Activated naive CD4-positive, alpha-beta T cell treated with anti-CD3 and anti-CD28 coated beads for 36 hours (primary cell): ENCODE measurements at regions of chr6 and their contacts with region 1.

Region 1: GRCh38 chr6:33788694-33789549 is at the start of gene LEMD2:
- DNase-seq: peak; percentile 95
- H3K4me3 Mint-ChIP-seq: peak within 1 kb of the TSS; percentile 88
- H3K27ac Mint-ChIP-seq: peak within 1 kb of the TSS; percentile 92
- H3K4me1 Mint-ChIP-seq: peaks cover 41% of the 10 kb centered on the region
- H3K27me3 Mint-ChIP-seq: no peaks in the 10 kb centered on the region
- total RNA-seq, gene LEMD2: 64.0 to 66.3 TPM

Region 2: DNA sequence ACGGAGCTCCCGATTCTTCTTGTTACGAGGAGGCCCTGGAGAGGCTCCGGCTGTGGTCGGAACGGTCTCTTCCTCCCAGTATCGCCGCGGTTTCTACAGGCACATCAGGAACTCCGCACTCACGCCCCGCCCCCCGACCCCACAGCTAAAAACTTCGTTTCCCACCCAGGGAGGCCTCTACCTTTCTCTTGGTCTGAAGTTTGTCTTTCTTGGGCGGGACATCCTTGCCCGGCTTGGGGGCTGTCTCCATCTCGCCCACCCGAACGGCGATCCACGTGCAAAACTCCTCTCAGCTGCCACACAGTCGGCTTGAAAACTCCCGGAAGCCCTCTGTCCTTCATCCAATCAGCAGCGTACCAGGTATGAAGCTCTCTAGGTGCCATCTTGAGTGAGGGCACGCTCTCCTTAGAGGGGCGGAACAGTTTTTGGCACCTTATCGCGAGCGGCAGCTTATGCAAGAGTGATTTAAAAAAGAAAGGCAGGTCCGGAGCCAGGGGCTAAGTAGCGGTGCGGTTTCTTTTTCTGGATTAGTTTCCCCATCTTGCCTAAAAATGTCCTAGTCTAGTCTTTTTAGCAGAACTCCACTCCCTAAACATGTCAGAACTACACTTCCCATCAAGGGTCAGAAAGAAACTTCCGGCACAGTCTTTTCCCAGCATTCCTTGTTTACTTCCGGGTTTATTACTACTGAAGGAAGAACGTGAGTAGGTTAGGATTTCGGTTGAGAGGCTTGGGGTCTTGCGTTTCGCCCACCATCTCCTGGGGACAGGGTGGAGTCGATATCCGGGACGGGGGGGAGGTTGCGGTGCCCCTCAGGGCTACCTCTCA is 499.8 kb before region 1 on chr6 and contains the starts of genes PFDN6 and WDR46:
- CTCF ChIA-PET with region 1: no interaction called
- intact Hi-C with region 1: loop called (anchors 2 kb)
- DNase-seq: peak; percentile 85
- H3K4me3 Mint-ChIP-seq: peak within 1 kb of the TSS; percentile 99
- H3K27ac Mint-ChIP-seq: peak within 1 kb of the TSS; percentile 91
- H3K4me1 Mint-ChIP-seq: peaks cover 43% of the 10 kb centered on the region
- H3K27me3 Mint-ChIP-seq: no peaks in the 10 kb centered on the region
- total RNA-seq, gene PFDN6: 67.9 to 81.3 TPM
- total RNA-seq, gene WDR46: 42.5 to 42.9 TPM

Region 3: DNA sequence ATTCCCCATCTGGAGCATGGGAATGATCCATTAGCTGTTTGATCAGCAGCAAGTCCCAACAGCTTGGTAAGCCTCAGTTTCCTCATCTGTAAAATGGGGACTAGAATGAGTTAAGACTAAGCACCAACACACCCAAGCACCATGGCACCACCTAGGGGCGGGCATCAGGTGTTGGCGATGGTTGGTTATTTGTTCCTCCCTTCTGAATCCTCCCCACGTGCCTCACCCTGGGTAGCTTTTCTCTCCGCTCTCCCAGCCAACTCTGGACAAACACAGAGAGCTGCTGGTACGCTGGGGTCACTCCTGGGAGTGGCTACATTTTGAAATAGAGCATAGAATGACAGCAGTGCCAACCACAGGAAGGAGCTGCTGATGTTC is 181.1 kb before region 1 on chr6:
- CTCF ChIA-PET with region 1: no interaction called
- intact Hi-C with region 1: no loop called
- DNase-seq: peak; percentile 70
- H3K4me3 Mint-ChIP-seq: no peak overlapping the region
- H3K27ac Mint-ChIP-seq: no peak overlapping the region
- H3K4me1 Mint-ChIP-seq: no peaks in the 10 kb centered on the region
- H3K27me3 Mint-ChIP-seq: no peaks in the 10 kb centered on the region

Region 4: GRCh38 chr6:33840048-33840926 is 51.4 kb after region 1 on chr6:
- CTCF ChIA-PET with region 1: no interaction called
- intact Hi-C with region 1: loop called (anchors 1 kb)
- DNase-seq: peak; percentile 72
- H3K4me3 Mint-ChIP-seq: no peak overlapping the region
- H3K27ac Mint-ChIP-seq: no peak overlapping the region
- H3K4me1 Mint-ChIP-seq: peaks cover 12% of the 10 kb centered on the region
- H3K27me3 Mint-ChIP-seq: no peaks in the 10 kb centered on the region

Region 5: DNA sequence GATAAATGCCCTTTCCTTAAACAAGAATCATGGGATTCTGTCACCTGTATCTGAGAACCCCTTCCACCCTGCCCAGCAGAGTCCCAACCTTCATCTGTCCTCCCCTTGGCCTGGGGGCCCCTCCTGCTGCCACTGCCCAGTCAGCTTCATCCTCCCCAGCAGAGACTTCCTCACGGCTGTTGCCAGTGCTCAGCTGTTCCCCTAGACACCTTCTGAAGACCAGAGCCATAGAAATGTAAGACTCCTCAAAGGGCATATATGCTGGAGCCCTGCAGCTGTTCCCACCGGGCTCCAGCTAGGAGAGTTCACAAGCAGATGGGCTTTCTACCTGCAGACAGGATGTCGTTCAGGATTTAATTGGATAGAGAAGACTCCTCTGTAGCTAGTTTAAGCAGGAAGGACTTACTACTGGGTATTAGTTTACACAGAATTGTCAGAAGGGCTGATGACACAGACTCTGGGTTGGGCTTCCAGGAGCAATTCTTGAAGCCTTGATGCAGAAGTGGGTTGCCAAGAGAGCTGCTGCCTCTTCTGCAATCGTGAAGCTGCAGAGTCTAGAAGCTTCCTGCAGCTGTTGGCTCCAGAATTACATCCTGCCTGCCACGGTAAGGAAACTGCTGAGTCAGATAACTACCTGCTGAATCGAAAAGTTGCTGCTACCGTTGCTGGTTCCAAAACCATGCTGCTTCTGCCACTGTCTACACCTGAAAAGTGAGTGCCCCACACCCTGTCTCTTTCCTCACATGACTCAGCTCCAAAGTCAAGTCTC is 72.0 kb after region 1 on chr6:
- CTCF ChIA-PET with region 1: no interaction called
- intact Hi-C with region 1: loop called (anchors 2 kb)
- DNase-seq: peak; percentile 64
- H3K4me3 Mint-ChIP-seq: no peak overlapping the region
- H3K27ac Mint-ChIP-seq: no peak overlapping the region
- H3K4me1 Mint-ChIP-seq: peaks cover 37% of the 10 kb centered on the region
- H3K27me3 Mint-ChIP-seq: no peaks in the 10 kb centered on the region

Region 6: DNA sequence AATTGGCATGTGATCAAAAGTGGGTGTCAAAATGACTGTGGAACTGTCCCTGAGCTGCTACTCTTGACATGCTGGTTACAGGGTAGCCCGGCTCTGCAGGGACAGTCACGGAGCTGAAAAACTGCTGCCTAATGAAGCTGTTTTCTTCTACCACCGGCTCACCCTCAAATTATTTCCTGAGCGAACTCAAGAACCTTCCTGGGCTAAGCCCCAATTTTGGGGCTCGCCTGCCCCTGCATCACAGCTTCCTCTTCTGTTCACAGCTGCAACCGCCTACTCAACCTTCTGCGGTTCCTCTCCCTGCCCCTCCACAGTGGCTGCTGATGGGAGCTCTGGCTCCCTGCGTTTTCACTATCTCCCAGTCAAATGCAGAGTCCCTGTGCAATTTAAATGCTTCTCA is 125.7 kb after region 1 on chr6:
- CTCF ChIA-PET with region 1: no interaction called
- intact Hi-C with region 1: loop called (anchors 5 kb)
- DNase-seq: peak; percentile 71
- H3K4me3 Mint-ChIP-seq: peak overlapping the region; percentile 16
- H3K27ac Mint-ChIP-seq: peak overlapping the region; percentile 4
- H3K4me1 Mint-ChIP-seq: peaks cover 27% of the 10 kb centered on the region
- H3K27me3 Mint-ChIP-seq: no peaks in the 10 kb centered on the region

Region 7: GRCh38 chr6:34696739-34697543 is 908.0 kb after region 1 on chr6 and contains the start of gene ILRUN:
- CTCF ChIA-PET with region 1: no interaction called
- intact Hi-C with region 1: loop called (anchors 10 kb)
- DNase-seq: peak; percentile 98
- H3K4me3 Mint-ChIP-seq: peak within 1 kb of the TSS; percentile 100
- H3K27ac Mint-ChIP-seq: peak within 1 kb of the TSS; percentile 99
- H3K4me1 Mint-ChIP-seq: peaks cover 44% of the 10 kb centered on the region
- H3K27me3 Mint-ChIP-seq: no peaks in the 10 kb centered on the region
- total RNA-seq, gene ILRUN: 51.4 to 53.3 TPM